ENCODE measurements at regions of chr18 and their contacts with region 1.

Region 1: GRCh38 chr18:59470561-59471121 is 111.6 kb upstream of the LMAN1 start:
- DNase-seq: no peak
- ATAC-seq: peak; percentile 79

Region 2: DNA sequence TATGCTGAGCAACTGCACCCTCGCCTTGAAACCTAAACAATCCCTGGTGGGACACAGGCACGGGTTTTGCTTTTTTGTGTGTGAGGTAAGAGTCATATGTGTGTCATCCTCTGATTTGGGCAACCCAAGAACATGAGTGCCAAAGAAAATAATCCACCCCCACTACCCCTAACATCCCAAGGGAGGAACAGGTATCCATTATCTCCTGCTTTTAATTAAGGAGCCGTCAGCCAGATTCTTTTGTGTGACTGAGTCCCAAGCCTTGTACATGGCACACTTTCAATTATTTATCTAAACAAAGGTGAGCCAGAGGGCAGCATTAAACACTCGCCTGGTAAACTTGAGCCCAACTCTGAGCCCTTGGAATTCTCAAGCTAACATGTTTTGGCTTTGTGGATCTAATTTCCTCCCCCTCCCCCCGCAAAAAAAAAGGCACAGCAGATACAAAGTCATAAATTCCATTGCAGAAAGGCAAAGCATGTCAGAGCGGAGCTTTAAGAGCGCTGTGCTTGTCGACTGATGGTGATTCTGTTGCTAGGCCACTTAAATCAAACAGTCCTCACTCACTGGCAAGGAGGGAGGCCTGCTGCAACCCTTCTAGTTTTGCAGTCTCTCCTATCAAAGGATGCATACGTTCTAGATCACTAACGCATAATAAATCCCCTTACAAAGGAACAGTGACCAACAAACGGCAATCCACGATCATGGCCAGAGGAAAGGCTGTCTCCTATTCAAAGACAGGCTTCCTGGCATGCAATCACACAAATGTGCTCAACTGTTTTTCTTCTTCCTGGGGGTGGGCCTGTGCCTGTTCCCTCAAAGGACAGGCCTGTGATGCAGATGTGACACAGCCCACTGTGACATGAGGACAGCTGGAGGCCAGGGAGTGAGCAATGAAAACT is 31.9 kb after region 1 on chr18:
- intact Hi-C with region 1: loop called (anchors 1 kb)
- DNase-seq: no peak
- ATAC-seq: peak; percentile 89

Region 3: GRCh38 chr18:59516356-59517155 is 45.9 kb after region 1 on chr18:
- intact Hi-C with region 1: loop called (anchors 1 kb)
- DNase-seq: no peak
- ATAC-seq: peak; percentile 87

Region 4: GRCh38 chr18:59547581-59548182 is 77.0 kb after region 1 on chr18:
- intact Hi-C with region 1: loop called (anchors 2 kb)
- DNase-seq: no peak
- ATAC-seq: peak; percentile 65

Region 5: GRCh38 chr18:59606193-59607077 is 135.8 kb after region 1 on chr18:
- intact Hi-C with region 1: loop called (anchors 5 kb)
- DNase-seq: no peak
- ATAC-seq: peak; percentile 74

Region 6: GRCh38 chr18:59744271-59744721 is 273.7 kb after region 1 on chr18:
- intact Hi-C with region 1: loop called (anchors 5 kb)
- DNase-seq: no peak
- ATAC-seq: no peak

Measured in Right ventricle myocardium inferior (tissue), 1 donor.